Ascending aorta (tissue), 2 donors: ENCODE measurements at regions of chr2 and their contacts with region 1.

Region 1: GRCh38 chr2:8836971-8837794 is at the start of gene KIDINS220:
- DNase-seq: peak; percentile 42 to 91
- H3K4me3 ChIP-seq: peak within 1 kb of the TSS; percentile 74 to 97
- H3K27ac ChIP-seq: peak within 1 kb of the TSS; percentile 68 to 79
- H3K4me1 ChIP-seq: peaks cover 8 to 21% of the 10 kb centered on the region in 2 donors
- H3K27me3 ChIP-seq: no peaks in the 10 kb centered on the region
- CTCF ChIP-seq: no peak
- total RNA-seq, gene KIDINS220: 59.1 TPM

Region 2: GRCh38 chr2:8355102-8355859 is 481.9 kb before region 1 on chr2:
- intact Hi-C with region 1: no loop called
- DNase-seq: no peak
- H3K4me3 ChIP-seq: no peak overlapping the region
- H3K27ac ChIP-seq: no peak overlapping the region
- H3K4me1 ChIP-seq: no peaks in the 10 kb centered on the region
- H3K27me3 ChIP-seq: no peaks in the 10 kb centered on the region
- CTCF ChIP-seq: no peak

Region 3: DNA sequence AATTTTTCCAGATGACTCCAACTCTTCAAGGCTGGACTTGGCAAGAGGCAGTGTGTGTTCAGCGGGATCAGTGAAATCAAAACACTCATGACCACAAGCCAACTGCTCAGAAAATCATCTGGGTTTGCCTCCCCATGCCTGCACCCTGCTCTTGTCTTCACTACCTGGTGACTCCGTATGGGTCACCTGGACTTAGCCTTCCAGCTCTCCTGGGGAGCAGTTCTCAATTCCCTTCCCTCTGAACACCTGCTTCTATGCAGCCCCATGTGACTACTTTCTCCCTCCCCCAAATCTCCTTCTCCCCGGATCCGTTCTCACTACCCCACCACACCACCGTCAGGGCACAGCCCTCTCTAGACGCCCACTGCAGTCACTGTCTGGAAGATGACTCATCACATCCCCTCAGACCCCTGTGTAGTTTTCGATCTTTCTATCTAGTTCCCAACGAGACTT is 285.5 kb before region 1 on chr2:
- intact Hi-C with region 1: no loop called
- DNase-seq: no peak
- H3K4me3 ChIP-seq: no peak overlapping the region
- H3K27ac ChIP-seq: no peak overlapping the region
- H3K4me1 ChIP-seq: no peaks in the 10 kb centered on the region
- H3K27me3 ChIP-seq: no peaks in the 10 kb centered on the region
- CTCF ChIP-seq: no peak

Region 4: DNA sequence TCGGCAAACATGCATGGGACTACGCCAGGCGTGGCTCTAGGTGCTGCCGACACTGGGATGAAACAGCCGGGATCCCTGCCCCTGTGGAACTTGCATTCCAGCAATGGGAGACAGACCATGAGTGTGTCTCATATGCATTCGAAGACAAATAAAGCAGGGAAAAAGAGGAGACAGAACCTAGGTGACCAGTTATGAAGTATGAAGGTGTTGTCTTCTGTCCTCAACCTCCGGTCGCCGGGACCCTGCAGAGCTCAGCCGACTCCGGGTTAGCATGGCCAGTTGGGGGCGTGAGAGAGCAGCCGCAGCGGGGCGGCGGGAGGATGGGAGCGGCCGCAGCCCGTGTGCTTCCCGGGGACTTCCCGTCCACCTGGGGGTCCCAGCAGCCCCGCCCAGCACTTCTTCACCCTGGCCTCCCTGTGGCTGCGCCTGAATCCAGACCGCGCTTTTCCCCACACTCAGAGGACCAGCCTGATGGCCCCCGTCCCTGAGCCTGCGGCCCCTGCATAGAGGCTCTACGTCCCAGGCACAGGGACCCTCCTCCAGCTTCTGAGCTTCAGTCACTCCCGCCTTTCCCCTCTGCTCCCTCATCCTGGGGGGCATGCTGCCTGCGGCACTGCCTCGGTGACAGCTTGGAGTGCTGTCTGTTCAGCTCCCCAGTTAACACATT is 143.9 kb before region 1 on chr2:
- intact Hi-C with region 1: no loop called
- DNase-seq: no peak
- H3K4me3 ChIP-seq: peak overlapping the region; percentile 3 to 46
- H3K27ac ChIP-seq: no peak overlapping the region
- H3K4me1 ChIP-seq: no peaks in the 10 kb centered on the region
- H3K27me3 ChIP-seq: no peaks in the 10 kb centered on the region
- CTCF ChIP-seq: peak; percentile 37 to 71 (median 38)

Region 5: DNA sequence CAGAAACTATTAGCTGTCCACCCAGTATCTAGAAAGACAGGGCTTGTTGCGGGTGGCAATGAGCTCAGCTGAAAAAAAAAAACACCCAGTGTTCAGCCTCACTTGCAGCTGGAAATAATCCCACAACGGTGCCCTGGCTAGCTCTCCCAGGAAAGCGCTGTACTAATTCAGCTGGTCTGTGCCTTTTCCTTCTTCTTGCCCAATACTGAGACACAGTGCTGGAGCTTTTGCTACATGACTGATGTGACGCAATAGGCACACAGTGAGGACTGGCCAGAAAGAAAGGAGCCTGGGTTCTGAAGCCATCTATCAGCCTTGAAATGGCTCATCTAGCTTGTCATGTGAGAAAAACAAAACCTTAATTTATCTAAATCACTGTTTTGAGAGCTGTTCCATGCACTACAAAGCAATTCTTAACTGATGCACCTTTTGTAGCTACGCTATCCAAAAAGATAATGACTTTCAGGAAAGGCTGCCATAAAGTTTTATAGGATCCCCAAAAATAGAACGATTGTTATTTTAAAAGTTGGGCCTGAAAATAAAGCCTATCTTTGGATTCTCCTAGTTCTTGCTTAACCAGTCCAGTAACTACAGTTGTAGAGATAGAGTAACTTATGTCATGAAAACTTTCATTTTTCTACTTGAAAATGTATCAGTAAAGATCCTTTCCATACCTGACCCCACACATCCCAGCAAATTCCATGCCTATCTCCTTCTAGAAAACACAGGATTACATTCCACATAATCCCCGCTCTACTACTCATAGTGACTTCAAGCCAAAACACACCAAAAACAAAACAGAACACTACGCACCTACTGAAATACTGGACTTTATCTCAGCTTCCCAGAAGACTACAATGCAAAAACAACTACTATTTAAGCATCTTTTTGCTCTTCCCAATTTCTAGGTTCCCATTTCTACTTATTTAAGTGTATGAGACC is 15.6 kb before region 1 on chr2:
- intact Hi-C with region 1: loop called (anchors 1 kb)
- DNase-seq: peak; percentile 48 to 86
- H3K4me3 ChIP-seq: peak overlapping the region; percentile 5 to 45
- H3K27ac ChIP-seq: peak overlapping the region; percentile 75 to 88
- H3K4me1 ChIP-seq: peaks cover 0 to 10% of the 10 kb centered on the region in 2 donors
- H3K27me3 ChIP-seq: no peaks in the 10 kb centered on the region
- CTCF ChIP-seq: no peak

Region 6: GRCh38 chr2:8918412-8918811 is 81.2 kb after region 1 on chr2:
- intact Hi-C with region 1: no loop called
- DNase-seq: no peak
- H3K4me3 ChIP-seq: no peak overlapping the region
- H3K27ac ChIP-seq: no peak overlapping the region
- H3K4me1 ChIP-seq: no peaks in the 10 kb centered on the region
- H3K27me3 ChIP-seq: no peaks in the 10 kb centered on the region
- CTCF ChIP-seq: no peak

Region 7: DNA sequence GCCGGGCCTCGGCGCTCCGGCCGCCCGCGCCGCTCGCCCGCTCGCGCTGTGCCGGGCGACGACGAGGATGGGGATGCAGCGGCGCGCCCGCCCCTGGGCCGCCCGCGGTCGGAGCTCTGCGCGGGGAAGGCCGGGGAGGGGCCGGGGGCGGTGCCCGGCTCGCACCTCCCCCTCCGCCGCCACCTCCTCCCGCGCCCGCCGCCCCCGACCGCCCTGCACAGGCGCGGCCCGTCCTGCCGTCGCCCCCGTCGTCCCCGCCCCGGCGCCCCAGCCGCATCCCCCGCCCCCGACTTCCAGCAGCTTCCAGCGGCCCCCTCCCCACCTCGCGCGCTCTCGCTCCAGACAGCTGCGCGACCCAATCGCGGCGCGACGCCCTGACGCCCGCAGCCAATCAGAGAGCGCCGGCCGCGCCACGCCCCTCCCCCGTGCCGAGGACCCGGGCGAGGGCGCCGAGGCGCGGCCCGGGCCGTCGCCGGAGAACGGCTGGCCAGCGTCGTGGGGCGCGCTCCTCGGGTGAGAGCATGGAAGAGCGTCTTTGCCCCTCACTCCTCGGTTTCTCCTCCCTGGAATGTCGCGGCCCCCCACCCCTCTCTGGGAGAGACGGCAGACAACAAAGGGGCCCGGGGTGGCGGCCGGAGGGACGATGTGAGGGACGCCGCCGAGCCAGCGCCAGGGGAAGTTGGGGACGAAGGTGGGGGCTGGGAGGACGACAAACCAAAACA is 166.6 kb after region 1 on chr2 and contains the start of gene MBOAT2:
- intact Hi-C with region 1: loop called (anchors 5 kb)
- DNase-seq: peak; percentile 14 to 88
- H3K4me3 ChIP-seq: peak within 1 kb of the TSS; percentile 80 to 97
- H3K27ac ChIP-seq: peak within 1 kb of the TSS; percentile 85 to 93
- H3K4me1 ChIP-seq: peaks cover 0 to 9% of the 10 kb centered on the region in 2 donors
- H3K27me3 ChIP-seq: no peaks in the 10 kb centered on the region
- CTCF ChIP-seq: no peak
- total RNA-seq, gene MBOAT2: 8.0 TPM